A549 (cell line): ENCODE measurements at regions of chr20 and their contacts with region 1.

Region 1: DNA sequence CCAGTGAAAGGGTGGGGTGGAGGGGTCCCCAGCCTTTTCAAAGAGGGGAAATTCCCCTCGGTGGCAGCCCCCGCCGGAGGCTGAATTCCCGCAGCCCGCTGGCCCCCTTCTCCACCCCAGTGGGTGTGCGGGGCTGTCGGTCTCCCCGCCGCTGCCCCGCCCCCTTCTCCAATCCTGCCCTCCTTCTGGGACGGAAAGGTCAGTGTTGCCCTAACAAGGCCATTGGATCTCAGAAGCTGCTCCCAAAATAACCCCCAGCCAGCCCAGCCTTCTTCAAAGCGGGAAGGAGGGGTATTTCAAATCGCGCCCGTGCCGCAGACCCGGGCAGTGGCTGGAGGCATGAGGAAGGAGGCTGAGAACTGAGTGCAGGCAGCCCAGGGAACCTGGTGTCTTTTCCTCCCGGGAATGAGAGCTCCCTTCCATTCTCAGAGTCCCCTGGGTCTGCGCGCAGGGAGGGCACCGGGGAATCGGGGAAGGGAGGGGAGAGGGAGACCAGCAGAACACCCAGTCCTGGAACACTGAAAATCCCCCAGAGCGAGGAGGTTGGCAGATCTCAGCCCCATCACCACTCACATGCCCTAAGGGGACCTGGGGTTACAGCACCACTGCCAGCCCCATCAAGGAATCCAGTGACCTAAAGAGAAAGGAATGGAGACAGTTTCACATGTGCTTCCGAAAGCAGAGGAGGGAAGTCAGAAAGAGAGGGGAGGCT is at the start of gene JPH2:
- DNase-seq: peak; percentile 58 to 60
- ATAC-seq: peak; percentile 74 to 81
- H3K4me3 ChIP-seq: peak within 1 kb of the TSS; percentile 48
- H3K27ac ChIP-seq: peak within 1 kb of the TSS; percentile 81 to 86
- H3K4me1 ChIP-seq: peaks cover 25% of the 10 kb centered on the region
- CTCF ChIP-seq: no peak
- EP300 ChIP-seq: no peak
- POLR2A ChIP-seq: 0 out of 2 replicates have a peak, but pooled peaks have one; percentile 32
- RAD21 ChIP-seq: no peak
- polyA plus RNA-seq, gene JPH2: 0.83 and 1.0 TPM in 2 replicates

Region 2: GRCh38 chr20:44092551-44093248 is 94.5 kb before region 1 on chr20:
- CTCF ChIA-PET with region 1: interaction called, 12 read pairs
- POLR2A ChIA-PET with region 1: no interaction called
- DNase-seq: peak in 1 of 2 experiments; percentile 60
- ATAC-seq: peak; percentile 66 to 80; a peak in 3 of 6 replicates
- H3K4me3 ChIP-seq: no peak overlapping the region
- H3K27ac ChIP-seq: no peak overlapping the region
- H3K4me1 ChIP-seq: peaks cover 4% of the 10 kb centered on the region; the same call in 2 of the 3 replicates
- CTCF ChIP-seq: peak; percentile 66
- EP300 ChIP-seq: no peak
- POLR2A ChIP-seq: no peak
- RAD21 ChIP-seq: peak; percentile 59 to 61

Region 3: DNA sequence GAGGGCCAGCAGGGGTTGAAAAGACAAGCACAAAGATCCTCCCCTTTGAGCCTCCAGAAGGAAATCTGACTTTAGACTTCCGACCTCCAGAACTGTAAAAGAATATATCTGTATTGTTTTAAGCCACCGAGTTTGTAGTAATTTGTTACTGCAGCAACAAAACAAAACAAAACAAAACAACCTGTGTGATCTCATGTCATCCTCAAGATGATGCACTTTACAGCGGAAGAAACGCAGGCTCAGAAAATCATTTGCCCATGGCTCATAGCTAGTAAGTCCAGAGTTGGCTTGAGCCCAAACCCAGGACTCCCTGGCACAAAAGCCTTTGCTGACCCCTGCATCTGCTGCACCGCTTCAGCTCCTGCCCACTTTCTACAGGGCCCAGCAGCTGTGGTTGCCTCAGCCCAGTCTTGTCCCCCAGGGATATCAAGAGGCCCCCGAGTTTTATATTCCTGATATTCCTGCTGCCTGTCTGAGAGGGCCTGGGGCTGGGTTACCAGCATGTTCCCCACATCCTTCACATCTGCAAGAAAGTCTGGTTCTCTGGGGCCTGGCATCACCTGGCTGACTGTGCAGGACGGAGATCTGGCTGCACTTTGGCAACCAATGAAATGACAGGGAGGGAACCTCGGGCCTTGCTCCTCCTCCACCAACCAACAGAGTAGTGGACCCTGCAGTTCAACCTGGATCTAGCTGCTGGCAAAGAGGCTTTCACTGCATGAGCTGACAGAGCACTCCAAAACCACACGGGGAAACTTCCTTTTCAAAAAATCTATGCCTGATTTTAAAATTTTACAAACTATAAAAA is 57.1 kb before region 1 on chr20:
- CTCF ChIA-PET with region 1: interaction called, 39 read pairs
- POLR2A ChIA-PET with region 1: no interaction called
- DNase-seq: no peak
- ATAC-seq: peak in 1 of 2 experiments; percentile 16; a peak in 1 of 6 replicates
- H3K4me3 ChIP-seq: no peak overlapping the region
- H3K27ac ChIP-seq: no peak overlapping the region
- H3K4me1 ChIP-seq: no peaks in the 10 kb centered on the region
- CTCF ChIP-seq: no peak
- EP300 ChIP-seq: no peak
- POLR2A ChIP-seq: no peak
- RAD21 ChIP-seq: no peak

Region 4: DNA sequence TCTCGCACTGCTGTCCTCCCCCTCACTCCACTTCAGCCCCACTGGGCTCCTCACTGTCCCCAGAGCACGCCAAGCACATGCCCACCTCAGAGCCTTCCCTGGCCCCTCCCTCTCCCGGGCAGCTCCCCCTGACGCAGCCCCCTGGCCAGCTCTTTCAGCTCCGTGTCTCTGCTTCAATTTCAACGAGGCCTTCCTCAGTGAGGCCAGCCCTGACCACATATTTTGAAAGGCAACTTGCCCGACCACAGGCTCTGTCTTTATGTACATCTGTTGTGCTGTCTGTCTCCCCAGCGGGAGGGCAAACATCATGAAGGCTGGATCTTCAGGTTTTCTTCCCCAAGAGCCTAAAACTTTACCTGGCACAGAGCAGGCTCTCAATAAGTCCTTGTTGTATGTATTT is 44.8 kb before region 1 on chr20:
- CTCF ChIA-PET with region 1: interaction called, 11 read pairs
- POLR2A ChIA-PET with region 1: no interaction called
- DNase-seq: no peak
- ATAC-seq: no peak
- H3K4me3 ChIP-seq: no peak overlapping the region
- H3K27ac ChIP-seq: no peak overlapping the region
- H3K4me1 ChIP-seq: no peaks in the 10 kb centered on the region
- CTCF ChIP-seq: no peak
- EP300 ChIP-seq: no peak
- POLR2A ChIP-seq: no peak
- RAD21 ChIP-seq: no peak

Region 5: DNA sequence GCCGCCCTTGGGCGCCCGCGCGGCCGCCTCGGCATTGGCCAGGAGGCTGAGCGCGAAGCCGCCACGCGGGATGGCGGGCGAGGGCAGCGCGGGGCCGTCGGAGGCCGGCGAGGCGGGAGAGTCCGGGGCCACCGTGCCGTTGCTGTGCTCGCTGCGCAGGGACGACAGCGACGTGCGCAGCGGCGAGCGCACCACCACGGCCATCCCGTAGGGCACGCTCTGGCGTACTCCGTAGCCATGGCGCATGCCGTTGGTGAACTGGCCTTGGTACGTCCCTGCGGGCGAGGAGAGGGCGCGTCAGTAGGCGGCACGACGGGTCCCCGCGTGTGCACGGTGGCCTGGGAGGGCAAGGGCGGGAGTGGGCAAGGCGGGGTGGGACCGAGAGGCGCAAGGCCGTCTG is 27.1 kb before region 1 on chr20:
- CTCF ChIA-PET with region 1: interaction called, 72 read pairs
- POLR2A ChIA-PET with region 1: interaction called, 15 read pairs
- DNase-seq: no peak
- ATAC-seq: no peak
- H3K4me3 ChIP-seq: no peak overlapping the region
- H3K27ac ChIP-seq: no peak overlapping the region
- H3K4me1 ChIP-seq: peaks cover 12% of the 10 kb centered on the region
- CTCF ChIP-seq: no peak
- EP300 ChIP-seq: no peak
- POLR2A ChIP-seq: no peak
- RAD21 ChIP-seq: no peak

Region 6: GRCh38 chr20:44203161-44203560 is 16.0 kb after region 1 on chr20:
- CTCF ChIA-PET with region 1: interaction called, 11 read pairs
- POLR2A ChIA-PET with region 1: no interaction called
- DNase-seq: no peak
- ATAC-seq: no peak
- H3K4me3 ChIP-seq: no peak overlapping the region
- H3K27ac ChIP-seq: peak overlapping the region; percentile 84 to 92
- H3K4me1 ChIP-seq: peaks cover 62% of the 10 kb centered on the region
- CTCF ChIP-seq: no peak
- EP300 ChIP-seq: no peak
- POLR2A ChIP-seq: no peak
- RAD21 ChIP-seq: no peak

Region 7: GRCh38 chr20:44331201-44331600 is 144.0 kb after region 1 on chr20:
- CTCF ChIA-PET with region 1: no interaction called
- POLR2A ChIA-PET with region 1: no interaction called
- DNase-seq: no peak
- ATAC-seq: no peak
- H3K4me3 ChIP-seq: no peak overlapping the region
- H3K27ac ChIP-seq: no peak overlapping the region
- H3K4me1 ChIP-seq: peaks cover 9% of the 10 kb centered on the region; the same call in 1 of the 3 replicates
- CTCF ChIP-seq: no peak
- EP300 ChIP-seq: no peak
- POLR2A ChIP-seq: no peak
- RAD21 ChIP-seq: no peak